Mammary epithelial cell (primary cell): ENCODE measurements at regions of chr2 and their contacts with region 1.

Region 1: DNA sequence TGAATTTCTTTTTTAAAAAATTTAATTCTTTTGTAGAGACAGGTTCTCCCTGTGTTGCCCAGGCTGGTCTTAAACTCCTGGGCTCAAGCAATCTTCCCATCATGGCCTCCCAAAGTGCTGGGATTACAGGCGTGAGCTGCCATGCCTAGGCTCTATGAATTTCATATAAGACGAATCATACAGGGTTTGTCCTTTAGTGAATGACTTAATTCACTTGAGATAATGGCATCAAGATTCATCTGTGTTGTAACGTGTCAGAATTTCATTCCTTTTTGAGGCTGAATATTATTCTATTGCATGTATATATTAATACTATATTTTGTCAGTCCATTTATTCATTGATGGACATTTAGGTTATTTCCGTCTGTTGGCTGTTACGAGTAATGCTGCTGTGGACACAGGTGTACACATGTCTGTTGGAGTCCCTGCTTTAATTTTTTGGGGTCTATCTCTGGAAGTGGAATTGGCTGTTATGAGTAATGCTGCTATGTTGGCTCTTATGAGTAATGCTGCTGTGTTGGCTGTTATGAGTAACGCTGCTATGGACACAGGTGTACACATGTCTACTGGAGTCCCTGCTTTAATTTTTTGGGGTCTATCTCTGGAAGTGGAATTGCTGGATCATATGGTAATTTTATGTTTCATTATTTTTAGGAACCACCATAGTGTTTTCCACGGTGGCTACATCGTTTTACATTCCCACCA is 210.6 kb downstream of the CAMKMT start:
- DNase-seq: peak; percentile 81
- H3K4me3 ChIP-seq: no peak overlapping the region
- H3K27ac ChIP-seq: peak overlapping the region; percentile 89
- H3K4me1 ChIP-seq: peaks cover 42% of the 10 kb centered on the region
- H3K27me3 ChIP-seq: no peaks in the 10 kb centered on the region
- CTCF ChIP-seq: no peak

Region 2: GRCh38 chr2:44510246-44510645 is 62.1 kb before region 1 on chr2:
- CTCF ChIA-PET with region 1: no interaction called
- dilution Hi-C with region 1: no loop called
- in situ Hi-C with region 1: no loop called
- intact Hi-C with region 1: no loop called
- DNase-seq: peak; percentile 38
- H3K4me3 ChIP-seq: no peak overlapping the region
- H3K27ac ChIP-seq: no peak overlapping the region
- H3K4me1 ChIP-seq: peaks cover 4% of the 10 kb centered on the region
- H3K27me3 ChIP-seq: no peaks in the 10 kb centered on the region
- CTCF ChIP-seq: no peak

Region 3: DNA sequence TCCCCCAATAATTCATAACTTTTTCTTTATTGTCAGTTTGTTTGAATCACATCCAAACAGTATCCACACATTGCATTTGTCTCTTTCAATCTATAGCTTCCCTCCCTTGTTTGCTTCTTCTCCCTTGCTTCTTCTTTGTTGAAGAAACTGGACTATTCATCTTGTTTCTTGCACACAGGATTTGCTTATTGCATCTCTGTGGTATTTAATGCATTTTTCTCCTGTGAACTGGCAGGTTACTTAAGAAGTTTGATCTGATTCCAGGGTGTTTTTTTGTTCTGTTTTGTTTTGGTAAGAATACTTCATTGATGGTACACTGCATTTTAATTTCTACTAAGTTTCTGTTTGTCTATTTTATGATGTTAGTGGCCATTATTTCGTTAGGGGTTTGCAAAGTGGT is 43.8 kb before region 1 on chr2:
- CTCF ChIA-PET with region 1: no interaction called
- dilution Hi-C with region 1: no loop called
- in situ Hi-C with region 1: no loop called
- intact Hi-C with region 1: loop called (anchors 2 kb)
- DNase-seq: peak; percentile 78
- H3K4me3 ChIP-seq: peak overlapping the region in 1 of 3 experiments; percentile 20
- H3K27ac ChIP-seq: peak overlapping the region; percentile 22
- H3K4me1 ChIP-seq: peaks cover 19% of the 10 kb centered on the region
- H3K27me3 ChIP-seq: no peaks in the 10 kb centered on the region
- CTCF ChIP-seq: no peak

Region 4: GRCh38 chr2:44616667-44617155 is 44.4 kb after region 1 on chr2:
- CTCF ChIA-PET with region 1: no interaction called
- dilution Hi-C with region 1: no loop called
- in situ Hi-C with region 1: no loop called
- intact Hi-C with region 1: no loop called
- DNase-seq: no peak
- H3K4me3 ChIP-seq: no peak overlapping the region
- H3K27ac ChIP-seq: no peak overlapping the region
- H3K4me1 ChIP-seq: no peaks in the 10 kb centered on the region
- H3K27me3 ChIP-seq: no peaks in the 10 kb centered on the region
- CTCF ChIP-seq: no peak

Region 5: GRCh38 chr2:45000341-45000901 is 428.1 kb after region 1 on chr2:
- CTCF ChIA-PET with region 1: no interaction called
- dilution Hi-C with region 1: no loop called
- in situ Hi-C with region 1: no loop called
- intact Hi-C with region 1: no loop called
- DNase-seq: no peak
- H3K4me3 ChIP-seq: no peak overlapping the region
- H3K27ac ChIP-seq: no peak overlapping the region
- H3K4me1 ChIP-seq: peaks cover 10% of the 10 kb centered on the region
- H3K27me3 ChIP-seq: peaks cover 42% of the 10 kb centered on the region
- CTCF ChIP-seq: no peak